ENCODE measurements at regions of chr13 and their contacts with region 1.

Region 1: DNA sequence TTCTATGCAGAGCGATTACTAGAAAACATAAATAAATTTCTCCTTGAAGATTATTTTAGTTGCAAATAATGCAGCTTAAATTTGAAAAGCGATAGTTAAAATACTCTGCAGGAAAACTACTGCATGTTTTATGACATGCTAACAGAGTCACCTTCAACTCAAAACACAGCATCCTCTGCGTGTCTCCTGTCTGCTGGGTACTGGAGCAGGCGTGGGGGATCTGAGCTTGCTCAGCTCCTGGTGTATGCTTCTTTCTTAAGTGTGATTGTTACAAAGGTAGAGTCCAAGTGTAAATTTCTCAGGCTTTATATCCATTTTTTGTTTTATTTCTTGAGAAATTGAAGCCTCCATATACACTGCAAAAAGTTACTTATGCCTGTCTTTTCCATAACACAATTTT is 15.3 kb downstream of the SPATA13 start:
- DNase-seq: no peak
- ATAC-seq: no peak
- H3K4me3 ChIP-seq: no peak overlapping the region
- H3K4me3 Mint-ChIP-seq: no peak overlapping the region
- H3K27ac ChIP-seq: no peak overlapping the region
- H3K27ac Mint-ChIP-seq: no peak overlapping the region
- H3K4me1 ChIP-seq: no peaks in the 10 kb centered on the region
- H3K4me1 Mint-ChIP-seq: peaks cover 16% of the 10 kb centered on the region
- H3K27me3 ChIP-seq: no peaks in the 10 kb centered on the region
- H3K27me3 Mint-ChIP-seq: no peaks in the 10 kb centered on the region
- CTCF ChIP-seq: no peak

Region 2: DNA sequence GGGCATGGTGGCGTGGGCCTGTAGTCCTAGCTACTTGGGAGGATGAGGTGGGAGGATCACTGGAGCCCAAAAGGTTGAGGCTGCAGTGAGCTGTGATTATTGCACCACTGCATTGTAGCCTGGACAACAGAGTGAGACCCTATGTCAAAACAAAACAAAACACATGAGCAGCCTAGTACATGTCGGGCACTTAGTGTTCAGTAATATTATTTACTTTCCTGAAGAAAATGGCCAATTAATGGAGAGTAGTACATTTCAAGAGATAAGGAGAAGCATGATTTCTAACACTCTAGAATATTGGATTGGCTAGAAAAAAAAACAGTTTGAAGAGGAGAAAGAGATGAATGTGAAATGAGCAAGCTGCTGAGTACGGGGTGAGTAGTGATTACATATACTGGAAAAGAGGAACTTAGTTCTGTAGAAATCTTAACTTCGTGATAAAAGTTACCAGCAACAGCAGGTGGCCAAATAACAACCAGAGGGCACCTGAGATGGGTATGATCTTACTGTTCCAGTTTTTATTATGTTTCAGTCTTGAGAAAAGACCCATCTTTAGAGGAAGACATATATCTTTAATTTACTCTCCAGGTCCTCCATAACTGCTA is 20.8 kb after region 1 on chr13:
- CTCF ChIA-PET with region 1: no interaction called
- POLR2A ChIA-PET with region 1: interaction called, 3 read pairs
- intact Hi-C with region 1: loop called in 1 of 2 experiments (anchors 1 kb)
- DNase-seq: no peak
- ATAC-seq: no peak
- H3K4me3 ChIP-seq: no peak overlapping the region
- H3K4me3 Mint-ChIP-seq: no peak overlapping the region
- H3K27ac ChIP-seq: no peak overlapping the region
- H3K27ac Mint-ChIP-seq: no peak overlapping the region
- H3K4me1 ChIP-seq: no peaks in the 10 kb centered on the region
- H3K4me1 Mint-ChIP-seq: peaks cover 4% of the 10 kb centered on the region
- H3K27me3 ChIP-seq: no peaks in the 10 kb centered on the region
- H3K27me3 Mint-ChIP-seq: no peaks in the 10 kb centered on the region
- CTCF ChIP-seq: no peak

Measured in CD8-positive, alpha-beta T cell (primary cell).